Right lobe of liver (tissue), 6 donors: ENCODE measurements at regions of chr15 and their contacts with region 1.

Region 1: GRCh38 chr15:75684642-75685041 is 28.0 kb downstream of the CSPG4 start:
- DNase-seq: no peak
- ATAC-seq: no peak
- H3K4me3 ChIP-seq: no peak overlapping the region
- H3K27ac ChIP-seq: no peak overlapping the region
- H3K4me1 ChIP-seq: peaks cover 0 to 12% (median 3%) of the 10 kb centered on the region in 4 donors
- H3K27me3 ChIP-seq: no peaks in the 10 kb centered on the region
- CTCF ChIP-seq: no peak
- POLR2A ChIP-seq: no peak

Region 2: GRCh38 chr15:74598126-74598842 is 1086.4 kb before region 1 on chr15:
- intact Hi-C with region 1: no loop called
- DNase-seq: peak; percentile 97 to 98 (median 97)
- ATAC-seq: peak; percentile 97 to 98 (median 98)
- H3K4me3 ChIP-seq: peak overlapping the region; percentile 50 to 68 (median 66)
- H3K27ac ChIP-seq: peak overlapping the region; percentile 79 to 93 (median 92)
- H3K4me1 ChIP-seq: peaks cover 0 to 10% (median 0%) of the 10 kb centered on the region in 4 donors
- H3K27me3 ChIP-seq: no peaks in the 10 kb centered on the region
- CTCF ChIP-seq: no peak
- POLR2A ChIP-seq: no peak

Region 3: DNA sequence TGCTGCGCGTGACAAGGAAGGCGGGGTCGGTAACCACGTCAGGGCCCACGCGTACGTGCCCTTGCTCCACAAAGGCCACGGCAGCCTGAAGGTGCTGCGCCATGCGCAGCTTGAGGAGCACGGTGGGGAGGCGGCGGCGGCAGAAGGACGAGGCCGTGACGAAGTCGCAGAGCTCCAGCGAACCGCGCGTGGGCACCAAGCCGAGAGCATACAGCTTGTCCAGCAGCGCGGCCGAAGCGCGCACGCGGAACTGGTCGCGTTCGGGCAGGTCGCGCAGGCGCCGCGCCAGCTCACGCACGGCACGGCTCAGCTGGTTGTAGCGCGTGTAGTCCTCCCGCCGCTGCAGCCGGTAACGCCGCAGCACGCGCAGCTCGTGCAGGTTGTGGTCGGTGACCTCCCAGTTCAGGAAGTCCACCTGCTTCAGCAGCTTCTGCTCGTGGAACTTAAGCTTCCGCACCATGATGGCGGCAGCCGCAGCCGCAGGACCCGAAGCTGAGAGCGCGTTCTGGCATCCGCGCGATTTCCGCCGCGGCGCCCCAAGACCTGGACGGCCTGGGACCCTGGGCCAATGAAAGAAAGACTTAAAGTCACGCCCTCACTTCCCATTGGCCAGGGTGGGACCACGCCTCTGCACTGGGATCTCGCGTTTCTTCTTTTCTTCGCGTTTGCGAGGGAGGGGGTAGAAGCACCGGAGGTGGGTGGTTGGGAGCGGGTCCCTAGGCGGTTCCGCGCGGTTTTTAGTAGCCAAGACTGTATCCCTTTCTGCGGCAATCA is 44.7 kb before region 1 on chr15 and contains the start of gene IMP3:
- intact Hi-C with region 1: loop called in 1 of 2 experiments (anchors 10 kb)
- DNase-seq: peak; percentile 93 to 97 (median 96)
- ATAC-seq: peak; percentile 87 to 95 (median 90)
- H3K4me3 ChIP-seq: peak within 1 kb of the TSS; percentile 94 to 99 (median 96)
- H3K27ac ChIP-seq: peak within 1 kb of the TSS; percentile 94 to 99 (median 97)
- H3K4me1 ChIP-seq: peaks cover 0 to 33% (median 13%) of the 10 kb centered on the region in 4 donors
- H3K27me3 ChIP-seq: no peaks in the 10 kb centered on the region
- CTCF ChIP-seq: no peak
- POLR2A ChIP-seq: peak; percentile 99
- total RNA-seq, gene IMP3: 37.7 to 192 (median 44.4) TPM